MCF 10A (cell line): ENCODE measurements at regions of chr9 and their contacts with region 1.

Region 1: GRCh38 chr9:35910613-35911359 is 1.5 kb downstream of the SPAAR start:
- DNase-seq: peak; percentile 86
- H3K4me3 Mint-ChIP-seq: peak overlapping the region; percentile 53
- H3K27ac Mint-ChIP-seq: peak overlapping the region; percentile 88
- H3K4me1 Mint-ChIP-seq: peaks cover 42% of the 10 kb centered on the region
- H3K27me3 Mint-ChIP-seq: no peaks in the 10 kb centered on the region
- CTCF ChIP-seq: peak; percentile 55

Region 2: DNA sequence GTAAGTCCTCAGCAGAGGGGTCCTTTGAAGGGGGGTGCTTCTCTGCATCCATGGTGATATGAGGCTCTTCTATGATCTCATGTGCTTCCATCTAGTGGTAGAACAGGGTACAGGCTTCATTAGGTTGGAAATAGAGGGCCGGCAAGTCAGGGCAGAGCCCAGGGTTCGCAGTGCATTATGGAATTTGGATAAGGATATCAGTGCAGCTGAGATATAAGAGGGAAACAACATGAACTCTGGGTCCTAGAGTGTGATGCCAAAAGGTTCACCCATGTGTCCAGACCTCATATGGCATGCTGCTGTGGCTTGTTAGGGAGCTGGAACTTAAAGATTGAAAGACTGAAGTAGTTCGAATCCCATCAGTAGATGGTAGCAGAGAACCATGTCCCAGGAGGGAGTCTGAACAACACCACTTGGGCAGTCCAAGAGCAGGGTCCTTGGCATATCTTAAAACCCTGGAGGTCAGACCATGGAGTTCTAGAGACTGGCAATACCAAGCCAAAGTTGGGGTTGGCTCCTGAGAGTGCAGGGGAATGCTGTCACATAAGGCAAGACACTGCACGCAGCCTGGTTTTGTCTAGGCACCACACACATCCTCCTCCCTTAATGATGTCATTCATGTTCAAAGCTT is 84.6 kb before region 1 on chr9:
- CTCF ChIA-PET with region 1: interaction called, 15 read pairs
- POLR2A ChIA-PET with region 1: interaction called, 11 read pairs
- intact Hi-C with region 1: no loop called
- DNase-seq: peak; percentile 73
- H3K4me3 Mint-ChIP-seq: no peak overlapping the region
- H3K27ac Mint-ChIP-seq: peak overlapping the region; percentile 46
- H3K4me1 Mint-ChIP-seq: peaks cover 40% of the 10 kb centered on the region
- H3K27me3 Mint-ChIP-seq: no peaks in the 10 kb centered on the region
- CTCF ChIP-seq: peak; percentile 60

Region 3: DNA sequence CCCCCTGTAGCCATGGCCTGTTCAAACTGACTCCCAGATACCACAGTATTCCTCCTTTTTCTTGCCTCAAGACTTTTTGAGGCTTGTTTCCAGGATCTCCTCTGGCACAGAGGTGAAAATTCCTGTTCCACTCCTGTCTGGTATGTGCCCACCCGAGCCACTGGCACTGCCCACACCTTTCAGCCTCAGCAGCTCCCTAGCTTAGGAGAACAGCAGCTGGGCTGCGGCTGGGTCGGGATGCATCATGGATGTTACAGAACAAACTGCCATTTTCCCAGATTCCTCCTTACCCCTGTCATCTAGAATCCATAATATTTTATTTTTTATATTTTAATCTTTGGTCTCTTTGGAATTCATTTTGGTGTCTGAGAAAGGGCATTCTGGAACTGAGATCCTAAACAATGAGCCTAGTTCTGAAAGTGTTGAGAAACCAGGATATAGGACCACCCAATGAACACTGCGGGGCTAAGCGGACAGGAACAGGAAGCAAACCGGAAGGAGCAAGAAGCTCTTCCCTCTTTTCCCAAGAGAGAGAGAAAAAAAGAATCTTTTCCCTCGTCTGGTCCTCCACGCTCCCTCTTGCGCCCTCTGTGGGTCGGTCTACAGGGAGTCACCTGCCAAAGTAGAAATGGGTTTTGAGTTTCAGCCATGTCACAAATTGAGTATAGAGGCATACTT is 34.7 kb after region 1 on chr9:
- CTCF ChIA-PET with region 1: interaction called, 88 read pairs
- POLR2A ChIA-PET with region 1: interaction called, 52 read pairs
- intact Hi-C with region 1: no loop called
- DNase-seq: peak; percentile 89
- H3K4me3 Mint-ChIP-seq: peak overlapping the region; percentile 72
- H3K27ac Mint-ChIP-seq: peak overlapping the region; percentile 79
- H3K4me1 Mint-ChIP-seq: peaks cover 7% of the 10 kb centered on the region
- H3K27me3 Mint-ChIP-seq: no peaks in the 10 kb centered on the region
- CTCF ChIP-seq: peak; percentile 73

Region 4: DNA sequence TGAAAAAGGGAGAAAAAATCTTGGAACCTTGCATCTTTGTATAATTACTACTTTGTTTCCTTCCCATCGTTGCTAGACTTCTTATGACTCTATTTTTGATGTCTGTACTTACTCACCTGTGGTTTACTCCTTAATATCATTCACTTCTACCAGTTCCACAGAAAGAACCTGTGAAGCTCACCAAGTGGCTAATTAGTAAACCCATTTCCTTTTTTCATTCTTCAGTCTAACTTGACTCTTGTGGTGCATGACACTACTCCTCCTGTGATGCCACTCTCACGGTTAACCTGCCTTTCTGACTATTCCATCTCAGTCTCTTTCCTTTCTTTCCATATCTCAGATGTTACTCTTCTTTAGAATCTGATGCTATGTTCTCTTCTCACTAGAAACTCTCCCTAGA is 140.5 kb after region 1 on chr9:
- CTCF ChIA-PET with region 1: no interaction called
- POLR2A ChIA-PET with region 1: no interaction called
- intact Hi-C with region 1: no loop called
- DNase-seq: no peak
- H3K4me3 Mint-ChIP-seq: no peak overlapping the region
- H3K27ac Mint-ChIP-seq: no peak overlapping the region
- H3K4me1 Mint-ChIP-seq: no peaks in the 10 kb centered on the region
- H3K27me3 Mint-ChIP-seq: no peaks in the 10 kb centered on the region
- CTCF ChIP-seq: no peak

Region 5: DNA sequence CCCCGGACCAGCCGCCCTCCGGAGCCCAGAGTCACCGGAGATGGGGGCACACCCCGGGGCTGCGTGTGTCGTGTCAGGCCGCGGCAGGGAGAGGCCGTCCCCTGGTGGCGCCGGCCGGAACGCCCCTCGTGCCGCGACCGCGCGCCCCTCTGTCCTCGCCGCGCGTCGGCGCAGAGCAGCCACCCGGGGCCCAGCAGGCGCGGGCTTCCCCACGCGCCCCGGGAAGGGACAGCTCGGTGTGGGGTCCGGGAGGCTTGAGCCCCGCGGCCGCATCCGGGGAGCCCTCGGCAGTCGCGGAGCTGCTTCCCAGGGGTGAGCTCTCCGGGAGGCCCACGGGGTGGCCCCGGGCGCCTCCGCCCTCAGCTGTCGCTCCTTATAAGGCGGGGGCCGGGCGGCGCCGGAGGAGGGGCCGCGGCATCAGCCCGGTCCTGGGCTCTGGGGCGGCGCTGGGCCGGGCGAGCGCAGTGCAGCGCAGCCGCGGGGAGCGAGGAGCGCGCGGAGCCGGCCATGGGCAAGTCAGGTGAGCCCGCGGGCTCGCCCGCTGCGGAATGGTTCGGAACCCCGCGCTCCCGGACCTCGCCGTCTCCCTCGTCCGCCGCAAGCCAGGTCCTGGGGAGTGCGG is 225.6 kb after region 1 on chr9 and contains the start of gene GLIPR2:
- CTCF ChIA-PET with region 1: no interaction called
- POLR2A ChIA-PET with region 1: no interaction called
- intact Hi-C with region 1: no loop called
- DNase-seq: peak; percentile 50
- H3K4me3 Mint-ChIP-seq: peak within 1 kb of the TSS; percentile 78
- H3K27ac Mint-ChIP-seq: no peak within 1 kb of the TSS
- H3K4me1 Mint-ChIP-seq: peaks cover 7% of the 10 kb centered on the region
- H3K27me3 Mint-ChIP-seq: peaks cover 28% of the 10 kb centered on the region
- CTCF ChIP-seq: no peak
- total RNA-seq, gene GLIPR2: 0.96 and 3.1 TPM in 2 replicates